GM10248 (cell line): ENCODE measurements at regions of chr3 and their contacts with region 1.

Region 1: DNA sequence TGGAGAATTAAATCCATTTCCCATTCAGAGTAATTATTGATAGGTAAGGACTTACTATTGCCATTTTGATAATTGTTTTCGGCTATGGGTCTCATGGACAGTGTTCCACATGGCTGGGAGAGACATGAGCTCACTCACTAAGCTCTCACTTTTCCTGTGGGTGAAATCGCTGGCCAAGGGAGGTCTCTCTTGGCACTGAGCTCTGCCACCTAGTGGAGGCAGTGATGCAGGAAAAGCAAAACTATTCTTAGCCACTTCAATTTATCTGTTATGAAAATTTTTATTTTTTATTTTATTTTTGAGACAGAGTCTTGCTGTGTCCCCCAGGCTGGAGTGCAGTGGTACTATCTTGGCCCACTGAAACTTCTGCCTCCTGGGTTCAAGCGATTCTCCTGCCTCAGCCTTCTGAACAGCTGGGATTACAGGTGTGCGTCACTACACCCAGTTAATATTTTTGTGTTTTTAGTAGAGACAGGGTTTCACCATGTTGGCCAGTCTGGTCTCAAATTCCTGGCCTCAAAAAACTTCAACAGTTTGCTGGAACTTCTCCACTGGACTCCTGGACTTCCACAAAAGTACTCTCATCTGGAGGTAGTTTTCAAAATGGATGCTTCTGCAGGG is 4.7 kb upstream of the RNF13 start:
- DNase-seq: peak; percentile 58
- CTCF ChIP-seq: peak; percentile 88

Region 2: DNA sequence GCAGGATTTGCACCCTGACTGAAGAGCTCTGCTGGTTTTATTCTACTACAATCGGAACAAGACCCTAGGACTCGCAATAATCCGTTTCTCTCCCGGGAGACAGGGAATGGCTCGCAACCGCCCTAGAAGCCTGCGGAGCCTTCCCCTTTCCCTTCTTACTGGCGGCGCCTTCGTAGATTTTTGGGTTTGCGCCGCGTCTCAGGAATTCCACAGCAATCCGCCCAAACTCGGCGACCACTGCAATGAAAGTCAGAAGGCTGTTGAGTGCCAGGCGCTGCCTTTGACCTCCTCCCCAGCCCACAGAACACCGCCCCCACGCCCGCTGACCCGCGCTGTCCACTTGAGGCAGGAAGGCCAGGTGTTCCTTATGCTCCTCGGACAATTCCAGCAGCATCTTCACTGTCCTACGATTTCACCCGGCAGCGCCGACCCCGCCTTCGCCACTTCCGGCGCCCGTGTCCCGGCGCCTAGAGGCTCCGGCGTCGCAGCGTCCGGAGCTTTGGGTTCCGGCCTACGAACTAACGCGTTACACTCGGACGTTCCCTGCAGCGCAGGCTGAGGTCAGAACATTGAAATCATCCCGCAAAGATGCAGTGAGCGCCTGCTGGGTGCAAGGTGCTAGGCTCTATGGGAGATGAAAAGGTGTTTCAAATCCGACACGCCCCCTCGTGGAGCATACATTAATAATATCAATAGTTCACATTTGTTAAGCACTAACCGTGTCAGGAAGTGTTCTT is 56.1 kb before region 1 on chr3 and contains the start of gene COMMD2:
- CTCF ChIA-PET with region 1: interaction called, 14 read pairs
- POLR2A ChIA-PET with region 1: no interaction called
- DNase-seq: peak; percentile 84
- CTCF ChIP-seq: no peak

Region 3: GRCh38 chr3:149771652-149772271 is 36.6 kb before region 1 on chr3:
- CTCF ChIA-PET with region 1: interaction called, 60 read pairs
- POLR2A ChIA-PET with region 1: no interaction called
- DNase-seq: peak; percentile 60
- CTCF ChIP-seq: peak; percentile 75

Region 4: GRCh38 chr3:149792452-149793270 is 15.7 kb before region 1 on chr3 and contains the start of gene ANKUB1:
- CTCF ChIA-PET with region 1: interaction called, 21 read pairs
- POLR2A ChIA-PET with region 1: no interaction called
- DNase-seq: no peak
- CTCF ChIP-seq: no peak

Region 5: GRCh38 chr3:149879872-149880271 is 71.6 kb after region 1 on chr3:
- CTCF ChIA-PET with region 1: interaction called, 11 read pairs
- POLR2A ChIA-PET with region 1: no interaction called
- DNase-seq: peak; percentile 10
- CTCF ChIP-seq: peak; percentile 27

Region 6: GRCh38 chr3:149925860-149926259 is 117.5 kb after region 1 on chr3:
- CTCF ChIA-PET with region 1: no interaction called
- POLR2A ChIA-PET with region 1: no interaction called
- DNase-seq: no peak
- CTCF ChIP-seq: no peak

Region 7: DNA sequence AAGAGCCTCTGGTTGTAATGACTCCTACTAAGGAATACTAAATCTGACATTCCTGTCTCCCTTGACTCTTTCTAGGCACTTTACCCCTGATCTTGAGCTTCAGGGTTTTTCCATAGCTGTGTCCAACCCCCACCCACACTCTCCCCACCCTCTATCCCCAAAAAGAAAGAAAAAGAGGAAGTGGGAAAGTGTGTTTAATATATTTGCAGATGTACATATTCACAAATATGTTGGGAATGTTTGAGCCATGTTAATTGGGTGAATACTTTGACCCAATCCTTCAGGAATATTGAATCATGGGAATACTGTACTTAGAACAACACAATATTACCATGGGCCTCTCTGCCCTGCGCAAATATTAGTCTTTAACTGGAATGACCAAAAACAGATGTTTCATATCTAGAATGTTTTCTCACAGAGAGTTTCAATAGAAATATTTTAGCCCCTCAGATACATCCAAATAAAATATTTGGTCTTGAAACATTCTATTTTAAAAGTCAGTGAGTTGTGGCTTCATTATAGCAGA is 182.2 kb after region 1 on chr3:
- CTCF ChIA-PET with region 1: no interaction called
- POLR2A ChIA-PET with region 1: no interaction called
- DNase-seq: no peak
- CTCF ChIP-seq: no peak